Endothelial cell of umbilical vein (primary cell): ENCODE measurements at regions of chr17 and their contacts with region 1.

Region 1: GRCh38 chr17:68377862-68378770 is 79.2 kb downstream of the WIPI1 start:
- DNase-seq: peak; percentile 92
- H3K4me3 ChIP-seq: no peak overlapping the region
- H3K27ac ChIP-seq: peak overlapping the region; percentile 75
- H3K4me1 ChIP-seq: peaks cover 32% of the 10 kb centered on the region
- H3K27me3 ChIP-seq: no peaks in the 10 kb centered on the region
- CTCF ChIP-seq: no peak
- POLR2A ChIP-seq: peak; percentile 53

Region 2: DNA sequence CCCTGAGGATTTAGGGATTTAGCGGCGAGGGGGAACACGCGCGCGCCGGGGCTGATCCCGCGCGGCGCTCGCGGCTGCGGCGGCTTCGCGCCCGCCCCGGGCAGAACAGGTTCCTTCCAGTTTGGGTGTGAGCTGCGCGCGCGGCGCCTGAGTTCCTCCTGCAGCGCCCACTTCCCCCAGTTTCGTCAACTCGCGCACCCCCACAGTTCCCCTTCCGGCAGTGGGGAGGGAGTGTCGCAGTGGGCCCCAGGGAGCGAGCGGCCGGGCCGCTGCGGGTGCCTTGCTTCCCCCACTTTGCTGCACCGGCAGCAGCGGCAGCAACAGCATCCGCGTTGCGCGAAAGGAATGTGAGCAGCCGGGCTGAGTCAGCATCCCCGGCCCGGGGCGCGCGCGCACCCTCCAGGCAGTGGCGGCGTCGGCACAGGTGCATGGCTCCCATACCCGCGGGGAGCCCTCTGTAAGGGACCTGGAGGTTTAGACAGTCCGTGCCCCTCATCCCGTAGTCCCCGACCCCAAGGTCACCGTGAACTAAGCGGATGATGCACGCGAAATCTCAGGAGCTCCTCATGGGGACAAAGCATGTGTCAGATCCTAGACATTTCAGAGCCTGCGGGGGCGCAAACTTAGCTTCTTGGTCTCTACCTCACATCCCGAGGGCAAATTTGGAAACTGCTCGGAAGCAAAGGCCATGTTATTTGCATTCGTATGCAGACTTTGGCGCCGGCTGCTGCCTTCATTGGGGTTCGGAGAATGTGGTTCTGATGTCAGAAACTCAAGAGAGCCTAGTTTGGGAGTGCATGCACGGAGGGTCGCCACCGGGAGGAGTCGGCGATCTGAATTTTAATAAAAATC is 86.0 kb before region 1 on chr17:
- CTCF ChIA-PET with region 1: interaction called, 17 read pairs
- POLR2A ChIA-PET with region 1: no interaction called
- dilution Hi-C with region 1: no loop called
- intact Hi-C with region 1: loop called (anchors 1 kb)
- DNase-seq: peak; percentile 74
- H3K4me3 ChIP-seq: peak overlapping the region; percentile 53 to 74 (median 66)
- H3K27ac ChIP-seq: peak overlapping the region; percentile 48
- H3K4me1 ChIP-seq: peaks cover 15% of the 10 kb centered on the region
- H3K27me3 ChIP-seq: no peaks in the 10 kb centered on the region
- CTCF ChIP-seq: peak; percentile 16 to 31
- POLR2A ChIP-seq: peak; percentile 57

Region 3: DNA sequence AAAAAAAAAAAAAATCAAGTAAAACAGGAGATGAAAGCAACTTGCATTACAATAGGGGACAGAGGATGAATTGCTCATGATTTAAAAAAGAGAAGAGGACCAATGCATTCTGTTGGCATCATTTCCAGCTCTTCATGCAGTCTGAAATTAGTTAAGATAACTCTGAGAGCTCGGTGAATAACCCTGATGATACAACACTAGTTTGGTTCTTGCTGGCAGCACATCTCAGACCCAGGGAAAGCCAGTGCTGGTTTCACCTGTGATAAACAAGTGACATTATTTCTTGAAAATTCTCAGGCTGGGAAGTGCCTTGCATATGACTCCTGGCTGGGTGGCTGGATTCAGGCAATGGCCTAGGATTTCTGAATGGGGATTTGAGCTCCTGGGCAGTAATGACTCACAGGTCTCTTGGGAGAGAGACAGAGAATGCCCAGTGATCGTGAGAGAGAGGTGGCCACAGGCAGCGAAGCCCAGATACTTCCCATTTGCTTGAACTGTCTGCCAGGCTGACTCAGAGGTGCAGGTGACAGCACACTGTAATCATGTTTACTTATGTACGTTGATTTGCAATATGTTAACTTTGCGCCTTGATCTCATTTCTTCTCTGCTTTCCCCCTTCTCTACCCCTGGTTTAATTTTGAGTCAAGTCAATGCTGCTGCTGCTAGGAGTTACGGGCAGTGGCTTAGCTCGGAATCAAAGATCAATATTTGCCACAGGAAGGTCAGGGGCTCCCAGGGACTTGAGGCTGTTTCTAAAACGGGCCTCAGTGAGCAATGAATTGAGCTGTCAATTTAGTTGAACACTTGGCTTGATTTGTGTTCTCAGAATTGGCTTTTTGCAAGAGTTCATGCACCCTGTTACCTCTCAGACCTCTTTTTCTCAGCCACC is 59.8 kb before region 1 on chr17:
- CTCF ChIA-PET with region 1: interaction called, 3 read pairs
- POLR2A ChIA-PET with region 1: no interaction called
- dilution Hi-C with region 1: no loop called
- intact Hi-C with region 1: loop called (anchors 2 kb)
- DNase-seq: no peak
- H3K4me3 ChIP-seq: no peak overlapping the region
- H3K27ac ChIP-seq: no peak overlapping the region
- H3K4me1 ChIP-seq: no peaks in the 10 kb centered on the region
- H3K27me3 ChIP-seq: no peaks in the 10 kb centered on the region
- CTCF ChIP-seq: no peak
- POLR2A ChIP-seq: no peak

Region 4: GRCh38 chr17:68356520-68356919 is 21.6 kb before region 1 on chr17:
- CTCF ChIA-PET with region 1: interaction called, 7 read pairs
- POLR2A ChIA-PET with region 1: no interaction called
- dilution Hi-C with region 1: no loop called
- intact Hi-C with region 1: loop called (anchors 2 kb)
- DNase-seq: no peak
- H3K4me3 ChIP-seq: no peak overlapping the region
- H3K27ac ChIP-seq: no peak overlapping the region
- H3K4me1 ChIP-seq: peaks cover 14% of the 10 kb centered on the region
- H3K27me3 ChIP-seq: no peaks in the 10 kb centered on the region
- CTCF ChIP-seq: no peak
- POLR2A ChIP-seq: no peak

Region 5: DNA sequence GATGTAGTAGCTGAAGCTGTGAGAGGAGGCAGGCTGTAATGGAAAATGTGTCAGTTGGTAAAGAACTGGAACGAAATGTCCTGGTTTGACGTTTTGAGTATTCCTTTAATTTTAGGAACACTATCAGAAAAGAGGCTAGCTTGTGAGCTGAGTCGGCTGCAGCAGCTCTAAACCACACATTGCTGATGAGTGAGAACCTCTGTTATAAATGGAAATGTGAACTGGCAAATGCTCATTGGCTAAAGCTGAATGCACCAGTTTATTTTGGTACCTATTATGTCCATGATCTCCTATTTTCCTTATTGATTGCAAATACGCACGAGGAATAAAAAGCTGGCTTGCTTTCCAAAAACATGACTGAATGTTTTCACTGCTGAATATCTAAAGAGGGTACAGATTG is 90.2 kb after region 1 on chr17:
- CTCF ChIA-PET with region 1: no interaction called
- POLR2A ChIA-PET with region 1: no interaction called
- dilution Hi-C with region 1: no loop called
- intact Hi-C with region 1: no loop called
- DNase-seq: no peak
- H3K4me3 ChIP-seq: no peak overlapping the region
- H3K27ac ChIP-seq: no peak overlapping the region
- H3K4me1 ChIP-seq: no peaks in the 10 kb centered on the region
- H3K27me3 ChIP-seq: peaks cover 6 to 8% of the 10 kb centered on the region in 2 experiments
- CTCF ChIP-seq: no peak
- POLR2A ChIP-seq: no peak

Region 6: GRCh38 chr17:69067274-69068047 is 689.3 kb after region 1 on chr17:
- CTCF ChIA-PET with region 1: no interaction called
- POLR2A ChIA-PET with region 1: no interaction called
- dilution Hi-C with region 1: no loop called
- intact Hi-C with region 1: no loop called
- DNase-seq: no peak
- H3K4me3 ChIP-seq: no peak overlapping the region
- H3K27ac ChIP-seq: no peak overlapping the region
- H3K4me1 ChIP-seq: no peaks in the 10 kb centered on the region
- H3K27me3 ChIP-seq: no peaks in the 10 kb centered on the region
- CTCF ChIP-seq: no peak
- POLR2A ChIP-seq: no peak